Activated CD4-positive, alpha-beta T cell treated with anti-CD3 and anti-CD28 coated beads for 36 hours (primary cell): ENCODE measurements at regions of chr9 and their contacts with region 1.

Region 1: DNA sequence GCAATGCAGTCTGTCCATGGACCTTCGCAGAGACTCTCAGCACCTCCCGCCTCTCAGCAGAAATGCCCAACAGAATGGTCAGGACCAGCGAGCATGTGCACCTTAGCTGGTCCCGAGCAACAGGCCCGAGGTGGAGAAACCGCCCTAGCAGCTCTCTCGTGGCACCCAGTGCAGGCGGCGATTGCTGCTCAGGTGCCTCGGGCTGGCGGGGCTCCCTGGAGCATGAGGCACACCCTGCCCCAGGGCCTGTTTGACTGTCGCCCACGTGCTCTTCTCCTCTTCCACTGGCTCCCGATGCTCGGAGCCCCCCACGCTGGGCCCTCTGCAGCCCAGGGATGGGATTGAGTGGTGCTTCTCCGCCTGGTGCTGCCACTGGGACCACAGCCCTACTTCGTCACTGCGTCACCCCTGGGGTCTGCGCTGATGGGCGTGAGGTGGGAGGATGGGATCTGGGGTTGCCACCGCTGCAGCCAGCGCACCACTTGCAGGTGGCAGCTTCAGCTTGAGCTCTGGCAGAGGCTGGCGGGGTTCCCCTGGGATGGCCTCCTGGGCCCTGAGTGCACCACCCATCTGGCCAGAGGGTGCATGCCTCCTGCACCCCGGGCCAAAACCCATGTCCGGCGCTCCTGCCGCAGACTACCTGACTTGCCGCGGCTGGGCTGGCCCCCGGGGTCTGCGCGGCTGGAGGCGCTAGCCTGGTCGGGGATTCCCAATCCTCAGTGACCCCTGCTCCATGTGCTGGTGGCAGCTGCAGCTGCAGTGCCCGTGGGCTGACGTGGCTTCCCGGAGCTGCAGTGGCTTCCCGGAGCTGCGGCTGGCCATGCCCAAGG is 244.2 kb downstream of the FOXD4L6 start:
- DNase-seq: peak; percentile 3
- ATAC-seq: no peak
- H3K4me3 Mint-ChIP-seq: no peak overlapping the region
- H3K27ac Mint-ChIP-seq: no peak overlapping the region
- H3K4me1 Mint-ChIP-seq: no peaks in the 10 kb centered on the region
- H3K27me3 Mint-ChIP-seq: no peaks in the 10 kb centered on the region

Region 2: GRCh38 chr9:40911647-40912046 is 27.4 kb after region 1 on chr9:
- CTCF ChIA-PET with region 1: no interaction called
- POLR2A ChIA-PET with region 1: no interaction called
- intact Hi-C with region 1: loop called in 1 of 2 experiments (anchors 2 kb)
- DNase-seq: no peak
- ATAC-seq: no peak
- H3K4me3 Mint-ChIP-seq: no peak overlapping the region
- H3K27ac Mint-ChIP-seq: no peak overlapping the region
- H3K4me1 Mint-ChIP-seq: no peaks in the 10 kb centered on the region
- H3K27me3 Mint-ChIP-seq: peaks cover 3% of the 10 kb centered on the region

Region 3: DNA sequence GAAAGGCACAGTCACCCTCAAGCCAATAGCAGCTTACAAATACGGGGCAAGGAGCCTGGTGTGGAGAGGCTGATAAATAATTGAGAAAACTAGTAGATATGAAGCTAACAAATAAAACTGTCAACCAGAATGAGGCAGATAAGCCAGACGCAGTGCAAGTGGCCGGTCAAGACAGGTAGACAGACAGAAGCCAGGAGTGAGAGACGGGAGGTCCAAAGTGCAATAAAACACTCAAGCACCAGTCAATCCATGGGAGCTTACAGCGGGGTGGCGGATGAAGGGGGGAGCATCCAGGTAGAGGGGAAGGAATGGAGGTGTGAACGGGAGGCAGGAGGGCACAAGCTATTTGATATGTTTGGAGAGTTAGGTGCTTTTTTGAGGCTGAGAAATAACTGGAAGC is 51.0 kb after region 1 on chr9:
- CTCF ChIA-PET with region 1: no interaction called
- POLR2A ChIA-PET with region 1: no interaction called
- intact Hi-C with region 1: loop called in 1 of 2 experiments (anchors 10 kb)
- DNase-seq: no peak
- ATAC-seq: no peak
- H3K4me3 Mint-ChIP-seq: no peak overlapping the region
- H3K27ac Mint-ChIP-seq: no peak overlapping the region
- H3K4me1 Mint-ChIP-seq: no peaks in the 10 kb centered on the region
- H3K27me3 Mint-ChIP-seq: no peaks in the 10 kb centered on the region